ENCODE measurements at regions of chr6 and their contacts with region 1.

Region 1: GRCh38 chr6:99868074-99868702 is 125.8 kb downstream of the MCHR2 start:
- DNase-seq: peak; percentile 83
- H3K4me3 Mint-ChIP-seq: no peak overlapping the region
- H3K27ac Mint-ChIP-seq: no peak overlapping the region
- H3K4me1 Mint-ChIP-seq: no peaks in the 10 kb centered on the region
- H3K27me3 Mint-ChIP-seq: peaks cover 25% of the 10 kb centered on the region
- CTCF ChIP-seq: peak; percentile 75

Region 2: GRCh38 chr6:99822741-99823512 is 45.3 kb before region 1 on chr6:
- CTCF ChIA-PET with region 1: no interaction called
- intact Hi-C with region 1: no loop called
- DNase-seq: peak; percentile 52
- H3K4me3 Mint-ChIP-seq: peak overlapping the region; percentile 66
- H3K27ac Mint-ChIP-seq: no peak overlapping the region
- H3K4me1 Mint-ChIP-seq: peaks cover 16% of the 10 kb centered on the region
- H3K27me3 Mint-ChIP-seq: peaks cover 31% of the 10 kb centered on the region
- CTCF ChIP-seq: peak; percentile 44

Region 3: GRCh38 chr6:99905209-99906106 is 37.3 kb after region 1 on chr6:
- CTCF ChIA-PET with region 1: interaction called, 16 read pairs
- intact Hi-C with region 1: loop called (anchors 2 kb)
- DNase-seq: peak; percentile 40
- H3K4me3 Mint-ChIP-seq: no peak overlapping the region
- H3K27ac Mint-ChIP-seq: no peak overlapping the region
- H3K4me1 Mint-ChIP-seq: no peaks in the 10 kb centered on the region
- H3K27me3 Mint-ChIP-seq: no peaks in the 10 kb centered on the region
- CTCF ChIP-seq: peak; percentile 67

Region 4: DNA sequence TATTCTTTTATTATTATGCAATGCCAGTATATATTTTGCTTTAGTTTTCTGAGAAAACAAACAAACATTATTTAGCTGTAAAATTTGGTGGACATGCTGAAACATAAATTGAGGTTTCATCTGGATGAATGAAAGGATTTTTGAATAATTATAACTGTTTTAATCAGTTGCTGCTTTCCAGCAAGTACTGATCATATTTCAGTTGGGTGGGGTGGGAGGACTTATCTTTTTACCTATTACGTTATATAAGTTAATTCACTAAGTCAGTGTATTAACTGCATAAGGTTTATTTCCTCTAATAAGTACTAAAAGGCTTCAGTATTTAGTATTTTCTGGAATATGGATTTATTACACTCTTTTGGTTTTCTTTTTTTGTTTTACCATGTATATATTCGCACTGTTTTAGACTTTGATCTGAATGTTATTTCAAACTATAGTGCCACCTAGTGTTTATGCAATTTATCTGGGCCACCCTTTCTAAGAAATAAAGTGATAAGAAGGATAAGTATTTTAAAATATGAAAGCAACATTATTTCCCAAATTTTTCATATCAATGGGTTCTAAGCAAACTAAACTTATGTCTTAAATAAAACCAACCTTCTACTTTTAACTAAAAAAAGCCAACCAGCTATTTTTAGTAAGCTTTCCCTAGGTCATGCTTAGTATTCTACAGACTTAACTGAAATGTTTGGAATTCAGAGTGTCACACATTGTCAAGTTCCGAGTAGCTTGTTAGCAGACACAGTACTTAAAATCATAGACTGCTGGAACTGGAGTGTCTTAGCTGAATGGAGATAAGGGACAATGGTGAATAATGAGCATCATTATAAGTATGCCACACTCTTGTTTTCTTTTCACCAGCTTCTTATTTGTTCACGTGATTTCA is 231.2 kb after region 1 on chr6:
- CTCF ChIA-PET with region 1: interaction called, 7 read pairs
- intact Hi-C with region 1: loop called (anchors 1 kb)
- DNase-seq: no peak
- H3K4me3 Mint-ChIP-seq: no peak overlapping the region
- H3K27ac Mint-ChIP-seq: no peak overlapping the region
- H3K4me1 Mint-ChIP-seq: no peaks in the 10 kb centered on the region
- H3K27me3 Mint-ChIP-seq: no peaks in the 10 kb centered on the region
- CTCF ChIP-seq: peak; percentile 49

Region 5: GRCh38 chr6:100134703-100135102 is 266.5 kb after region 1 on chr6:
- CTCF ChIA-PET with region 1: no interaction called
- intact Hi-C with region 1: no loop called
- DNase-seq: no peak
- H3K4me3 Mint-ChIP-seq: no peak overlapping the region
- H3K27ac Mint-ChIP-seq: no peak overlapping the region
- H3K4me1 Mint-ChIP-seq: no peaks in the 10 kb centered on the region
- H3K27me3 Mint-ChIP-seq: no peaks in the 10 kb centered on the region
- CTCF ChIP-seq: no peak

Region 6: GRCh38 chr6:100185615-100186014 is 317.4 kb after region 1 on chr6:
- CTCF ChIA-PET with region 1: no interaction called
- intact Hi-C with region 1: no loop called
- DNase-seq: no peak
- H3K4me3 Mint-ChIP-seq: no peak overlapping the region
- H3K27ac Mint-ChIP-seq: no peak overlapping the region
- H3K4me1 Mint-ChIP-seq: peaks cover 8% of the 10 kb centered on the region
- H3K27me3 Mint-ChIP-seq: no peaks in the 10 kb centered on the region
- CTCF ChIP-seq: no peak

Region 7: DNA sequence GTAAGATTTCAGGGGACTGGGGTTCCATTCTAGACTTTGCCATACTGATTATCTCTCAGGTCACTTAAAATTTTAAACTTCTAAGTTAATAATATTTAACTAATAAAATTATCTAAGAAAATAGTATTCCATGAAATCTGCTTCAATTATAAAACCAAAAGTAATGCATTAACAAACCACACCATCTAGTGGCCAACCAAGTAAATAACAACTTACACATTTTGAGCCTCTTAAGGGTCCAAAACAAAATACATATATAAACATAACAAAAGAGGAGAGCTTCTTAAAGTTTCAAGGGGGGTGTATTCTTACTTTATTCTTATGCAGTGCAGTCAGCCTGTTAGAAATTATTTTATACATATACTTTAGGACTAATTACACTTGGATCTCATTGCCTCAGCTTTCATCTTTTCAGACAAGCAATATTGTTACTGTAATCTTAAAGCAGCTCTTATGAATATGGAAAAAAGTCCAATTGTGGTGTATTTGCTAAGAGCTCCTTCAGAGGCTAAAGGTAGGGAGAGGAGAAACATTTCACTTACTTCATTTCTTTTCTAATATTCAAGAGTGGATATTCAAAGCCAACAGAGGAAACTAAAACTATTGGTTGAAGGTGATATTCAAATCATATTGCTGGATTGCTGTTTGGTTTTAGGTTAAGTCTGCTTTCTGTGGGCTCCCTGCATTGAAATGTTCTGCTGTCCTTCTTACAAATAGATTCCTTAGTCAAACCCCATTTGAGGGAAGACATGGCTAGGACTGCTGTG is 796.3 kb after region 1 on chr6:
- CTCF ChIA-PET with region 1: interaction called, 5 read pairs
- intact Hi-C with region 1: loop called (anchors 10 kb)
- DNase-seq: peak; percentile 11
- H3K4me3 Mint-ChIP-seq: no peak overlapping the region
- H3K27ac Mint-ChIP-seq: peak overlapping the region; percentile 94
- H3K4me1 Mint-ChIP-seq: peaks cover 34% of the 10 kb centered on the region
- H3K27me3 Mint-ChIP-seq: no peaks in the 10 kb centered on the region
- CTCF ChIP-seq: no peak